Endothelial cell of umbilical vein (primary cell): ENCODE measurements at regions of chr10 and their contacts with region 1.

Region 1: DNA sequence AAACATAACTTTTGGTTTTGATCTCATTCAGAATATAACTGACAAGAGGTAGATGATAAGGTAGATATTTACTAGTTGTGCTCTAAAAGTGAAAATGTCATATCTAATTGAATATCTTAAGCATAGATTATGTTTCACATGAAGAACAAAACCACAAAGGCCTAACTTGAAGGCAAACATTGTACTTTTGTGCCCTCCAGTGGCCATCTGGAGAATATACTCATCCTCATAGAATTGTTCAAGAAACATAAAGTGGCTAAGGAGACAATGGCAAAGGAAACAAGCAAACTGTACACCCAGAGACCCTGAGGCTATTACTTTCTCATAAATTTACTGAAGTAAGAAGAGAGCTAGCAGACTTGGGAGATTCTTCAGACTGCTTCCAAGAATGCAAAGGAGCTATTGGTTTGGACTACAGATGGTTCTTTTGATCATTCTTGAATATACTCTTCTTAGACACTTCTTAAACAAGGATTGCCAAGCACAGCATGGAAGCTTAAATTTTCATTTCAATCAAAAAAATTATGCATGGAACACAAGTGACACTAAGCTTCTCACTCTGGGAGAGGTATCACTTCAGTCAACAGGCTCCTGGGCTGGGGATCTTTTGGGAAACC is 98.2 kb upstream of the DKK1 start:
- DNase-seq: peak; percentile 79
- H3K4me3 ChIP-seq: no peak overlapping the region
- H3K27ac ChIP-seq: no peak overlapping the region
- H3K4me1 ChIP-seq: no peaks in the 10 kb centered on the region
- H3K27me3 ChIP-seq: no peaks in the 10 kb centered on the region
- CTCF ChIP-seq: peak; percentile 51 to 57
- POLR2A ChIP-seq: no peak

Region 2: DNA sequence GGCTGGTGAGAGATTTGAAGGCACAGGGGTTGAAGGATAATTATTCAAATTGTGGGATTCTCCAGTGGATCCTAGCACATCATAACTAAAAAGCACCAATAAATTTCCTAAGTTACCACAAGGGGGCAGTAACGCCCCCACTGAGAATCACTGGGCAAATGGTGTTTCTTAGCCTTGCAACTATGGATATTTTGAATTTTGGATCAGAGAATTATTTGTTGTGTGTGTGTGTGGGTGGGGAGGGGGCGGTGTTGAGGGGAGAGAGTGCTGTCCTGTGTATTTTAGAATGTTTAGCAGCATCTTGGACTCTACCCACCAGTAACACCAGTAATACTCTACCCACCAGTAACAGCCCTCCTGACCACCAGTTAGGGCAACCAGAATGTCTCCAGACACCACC is 1204.9 kb before region 1 on chr10:
- CTCF ChIA-PET with region 1: interaction called, 4 read pairs
- POLR2A ChIA-PET with region 1: no interaction called
- dilution Hi-C with region 1: no loop called
- intact Hi-C with region 1: loop called (anchors 5 kb)
- DNase-seq: peak; percentile 46
- H3K4me3 ChIP-seq: no peak overlapping the region
- H3K27ac ChIP-seq: no peak overlapping the region
- H3K4me1 ChIP-seq: no peaks in the 10 kb centered on the region
- H3K27me3 ChIP-seq: peaks cover 4 to 6% of the 10 kb centered on the region in 2 experiments
- CTCF ChIP-seq: peak; percentile 56 to 73
- POLR2A ChIP-seq: no peak

Region 3: DNA sequence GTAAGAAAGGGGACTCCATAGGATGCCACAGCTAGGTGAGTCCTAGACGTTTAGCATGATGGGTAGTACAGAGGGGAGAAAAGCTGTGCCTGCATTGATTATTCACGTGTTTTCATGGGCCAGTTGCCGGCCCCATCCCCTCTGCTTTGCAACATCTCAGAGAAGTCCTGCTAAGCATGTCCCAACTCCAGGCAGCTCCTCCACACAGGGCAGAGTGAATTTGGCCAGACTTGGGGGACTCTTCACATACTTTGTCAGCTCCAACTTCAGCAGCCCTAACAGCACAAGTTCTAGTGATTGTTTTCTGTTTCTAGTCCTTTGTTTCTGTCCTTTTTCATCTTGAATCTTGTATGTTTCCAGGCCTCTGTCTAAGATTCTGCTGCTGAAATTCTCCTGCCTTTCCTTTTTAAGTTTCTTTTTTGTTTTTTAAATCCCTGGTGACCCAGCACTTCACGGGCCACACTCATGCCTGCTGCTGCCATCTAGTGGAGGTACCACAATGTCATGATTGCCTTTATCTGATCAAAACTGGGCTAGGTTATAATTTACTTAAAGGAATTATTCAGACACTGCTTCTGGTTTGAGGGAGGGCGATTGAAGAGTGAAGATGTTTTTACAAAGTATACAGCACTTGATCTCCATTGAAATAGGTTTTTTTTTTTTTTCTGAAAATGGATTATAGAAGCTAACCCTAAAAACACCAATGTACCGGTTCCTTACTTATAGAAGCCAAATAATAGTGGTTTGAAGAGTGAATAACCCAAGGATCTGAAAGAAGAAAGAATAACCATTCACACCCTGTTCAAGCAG is 793.3 kb before region 1 on chr10:
- CTCF ChIA-PET with region 1: interaction called, 3 read pairs
- POLR2A ChIA-PET with region 1: no interaction called
- dilution Hi-C with region 1: no loop called
- intact Hi-C with region 1: loop called (anchors 10 kb)
- DNase-seq: peak; percentile 72
- H3K4me3 ChIP-seq: no peak overlapping the region
- H3K27ac ChIP-seq: no peak overlapping the region
- H3K4me1 ChIP-seq: peaks cover 6% of the 10 kb centered on the region
- H3K27me3 ChIP-seq: no peaks in the 10 kb centered on the region
- CTCF ChIP-seq: peak; percentile 62 to 70
- POLR2A ChIP-seq: no peak

Region 4: DNA sequence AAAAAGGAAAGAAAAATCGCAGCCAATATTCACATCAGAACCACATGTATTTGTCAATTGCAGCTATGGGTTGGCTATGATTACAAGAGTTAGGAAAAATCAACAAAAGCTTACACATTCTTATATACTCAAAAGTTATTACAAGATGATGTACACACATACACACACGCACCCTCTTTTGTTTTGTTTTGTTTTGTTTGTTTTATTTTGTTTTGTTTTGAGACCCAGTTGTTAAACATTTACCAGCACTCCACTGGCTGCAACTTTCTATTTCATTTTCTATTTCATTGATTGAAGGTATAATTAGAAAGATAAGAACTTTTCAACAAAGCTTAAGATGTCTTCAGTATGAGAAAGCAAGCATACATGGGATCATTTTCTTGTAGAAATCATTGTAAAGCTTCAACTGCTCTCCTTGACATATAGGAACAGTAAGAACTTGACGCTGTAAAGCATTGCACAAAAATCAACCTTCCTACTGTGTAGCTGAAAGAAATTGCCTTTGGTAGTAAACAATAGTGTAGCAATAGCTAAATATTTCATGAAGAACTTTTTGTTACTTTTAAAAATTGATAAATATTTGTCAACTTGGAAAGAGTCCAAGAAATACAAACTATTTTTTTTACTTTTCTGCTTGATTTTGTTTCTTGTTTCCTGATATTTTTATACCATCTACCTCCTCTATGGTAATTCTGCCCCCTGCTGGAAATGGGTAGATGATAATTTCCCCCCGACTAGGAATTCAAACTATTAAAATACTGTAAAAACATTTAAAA is 350.8 kb after region 1 on chr10:
- CTCF ChIA-PET with region 1: interaction called, 5 read pairs
- POLR2A ChIA-PET with region 1: no interaction called
- dilution Hi-C with region 1: no loop called
- intact Hi-C with region 1: loop called (anchors 2 kb)
- DNase-seq: peak; percentile 81
- H3K4me3 ChIP-seq: no peak overlapping the region
- H3K27ac ChIP-seq: no peak overlapping the region
- H3K4me1 ChIP-seq: peaks cover 14% of the 10 kb centered on the region
- H3K27me3 ChIP-seq: no peaks in the 10 kb centered on the region
- CTCF ChIP-seq: peak; percentile 18 to 47
- POLR2A ChIP-seq: no peak